ENCODE measurements at regions of chr17 and their contacts with region 1.

Region 1: DNA sequence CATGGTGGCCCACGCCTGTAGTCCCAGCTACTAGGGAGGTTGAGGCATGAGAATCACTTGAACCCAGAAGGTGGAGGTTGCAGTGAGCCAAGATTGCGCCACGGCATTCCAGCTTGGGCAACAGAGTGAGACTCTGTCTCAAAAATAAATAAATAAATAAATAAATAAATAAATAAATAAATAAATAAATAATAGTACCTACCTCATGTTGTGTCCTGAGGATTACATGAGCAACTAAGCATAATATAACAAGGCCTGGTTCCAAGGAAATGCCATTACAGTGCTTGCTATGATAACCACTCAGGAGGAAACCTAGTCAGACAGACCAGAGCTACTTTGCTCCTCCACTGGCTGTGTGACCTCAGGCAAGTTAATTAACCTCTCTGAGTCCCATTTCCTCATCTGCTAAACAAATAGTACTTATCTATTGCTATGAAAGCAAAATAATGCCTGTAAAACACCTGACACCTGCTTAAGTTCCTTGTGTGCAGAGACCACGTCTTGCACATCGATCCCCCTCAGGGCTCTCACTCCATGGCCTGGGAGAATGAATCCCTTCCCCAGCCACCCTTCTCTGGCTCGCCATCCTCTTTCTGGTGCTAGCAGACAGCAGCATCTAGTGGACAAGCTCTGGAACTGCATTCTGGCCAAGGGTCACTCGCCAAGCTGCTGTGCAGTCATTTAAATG is 7.5 kb downstream of the EPOP start:
- DNase-seq: no peak
- ATAC-seq: peak; percentile 76
- H3K4me3 ChIP-seq: no peak overlapping the region
- H3K27ac ChIP-seq: no peak overlapping the region
- H3K4me1 ChIP-seq: peaks cover 5% of the 10 kb centered on the region
- H3K27me3 ChIP-seq: peaks cover 6 to 11% of the 10 kb centered on the region in 2 experiments; a peak in 3 of 4 replicates
- CTCF ChIP-seq: peak; percentile 100; a peak in 5 of 6 replicates
- EP300 ChIP-seq: no peak
- POLR2A ChIP-seq: no peak
- RAD21 ChIP-seq: peak; percentile 100

Region 2: DNA sequence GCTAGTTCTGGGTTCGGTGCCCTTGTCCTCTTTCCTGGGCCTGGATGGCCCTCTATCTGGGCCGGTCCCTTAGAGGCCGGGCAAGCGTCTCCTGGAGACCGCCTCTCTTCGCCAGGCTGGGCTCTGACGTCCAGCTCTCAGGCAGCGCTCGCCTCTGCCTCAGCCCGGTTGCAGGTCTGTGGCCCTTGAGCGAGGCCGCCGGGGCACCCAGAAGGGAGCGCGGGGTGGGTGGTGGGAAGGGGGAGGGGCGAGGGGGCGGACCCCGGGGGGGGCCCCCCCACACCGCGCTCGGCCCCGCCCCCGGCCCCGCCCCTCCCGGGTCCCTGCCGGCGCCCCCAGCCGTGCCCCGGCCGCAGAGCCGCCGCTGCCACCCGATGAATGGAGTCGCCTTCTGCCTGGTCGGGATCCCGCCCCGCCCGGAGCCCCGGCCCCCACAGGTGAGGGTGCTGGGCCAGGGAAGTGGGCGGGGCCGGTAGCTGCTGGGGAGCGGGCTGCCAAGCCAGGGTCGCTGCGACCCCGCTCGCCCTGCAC is 239.1 kb before region 1 on chr17 and contains the start of gene ARHGAP23:
- CTCF ChIA-PET with region 1: interaction called, 10 read pairs
- POLR2A ChIA-PET with region 1: no interaction called
- RAD21 ChIA-PET with region 1: interaction called, 6 read pairs
- SMC1A ChIA-PET with region 1: interaction called, 12 read pairs
- in situ Hi-C with region 1: loop called (anchors 5 kb)
- intact Hi-C with region 1: loop called (anchors 1 kb)
- DNase-seq: no peak
- ATAC-seq: peak; percentile 71
- H3K4me3 ChIP-seq: peak within 1 kb of the TSS; percentile 80
- H3K27ac ChIP-seq: no peak within 1 kb of the TSS
- H3K4me1 ChIP-seq: peaks cover 4% of the 10 kb centered on the region
- H3K27me3 ChIP-seq: no peaks in the 10 kb centered on the region; a peak in 1 of 4 replicates
- CTCF ChIP-seq: no peak
- EP300 ChIP-seq: no peak
- POLR2A ChIP-seq: no peak; the same call in 1 of the 2 replicates
- RAD21 ChIP-seq: no peak
- polyA plus RNA-seq, gene ARHGAP23: 0.23 to 0.35 TPM

Region 3: GRCh38 chr17:38498186-38498752 is 169.0 kb before region 1 on chr17:
- CTCF ChIA-PET with region 1: interaction called, 79 read pairs
- POLR2A ChIA-PET with region 1: no interaction called
- RAD21 ChIA-PET with region 1: interaction called, 11 read pairs
- SMC1A ChIA-PET with region 1: interaction called, 10 read pairs
- in situ Hi-C with region 1: loop called (anchors 5 kb)
- intact Hi-C with region 1: no loop called
- DNase-seq: no peak
- ATAC-seq: no peak
- H3K4me3 ChIP-seq: no peak overlapping the region
- H3K27ac ChIP-seq: no peak overlapping the region
- H3K4me1 ChIP-seq: no peaks in the 10 kb centered on the region
- H3K27me3 ChIP-seq: no peaks in the 10 kb centered on the region
- CTCF ChIP-seq: no peak
- EP300 ChIP-seq: no peak
- POLR2A ChIP-seq: no peak
- RAD21 ChIP-seq: no peak

Region 4: DNA sequence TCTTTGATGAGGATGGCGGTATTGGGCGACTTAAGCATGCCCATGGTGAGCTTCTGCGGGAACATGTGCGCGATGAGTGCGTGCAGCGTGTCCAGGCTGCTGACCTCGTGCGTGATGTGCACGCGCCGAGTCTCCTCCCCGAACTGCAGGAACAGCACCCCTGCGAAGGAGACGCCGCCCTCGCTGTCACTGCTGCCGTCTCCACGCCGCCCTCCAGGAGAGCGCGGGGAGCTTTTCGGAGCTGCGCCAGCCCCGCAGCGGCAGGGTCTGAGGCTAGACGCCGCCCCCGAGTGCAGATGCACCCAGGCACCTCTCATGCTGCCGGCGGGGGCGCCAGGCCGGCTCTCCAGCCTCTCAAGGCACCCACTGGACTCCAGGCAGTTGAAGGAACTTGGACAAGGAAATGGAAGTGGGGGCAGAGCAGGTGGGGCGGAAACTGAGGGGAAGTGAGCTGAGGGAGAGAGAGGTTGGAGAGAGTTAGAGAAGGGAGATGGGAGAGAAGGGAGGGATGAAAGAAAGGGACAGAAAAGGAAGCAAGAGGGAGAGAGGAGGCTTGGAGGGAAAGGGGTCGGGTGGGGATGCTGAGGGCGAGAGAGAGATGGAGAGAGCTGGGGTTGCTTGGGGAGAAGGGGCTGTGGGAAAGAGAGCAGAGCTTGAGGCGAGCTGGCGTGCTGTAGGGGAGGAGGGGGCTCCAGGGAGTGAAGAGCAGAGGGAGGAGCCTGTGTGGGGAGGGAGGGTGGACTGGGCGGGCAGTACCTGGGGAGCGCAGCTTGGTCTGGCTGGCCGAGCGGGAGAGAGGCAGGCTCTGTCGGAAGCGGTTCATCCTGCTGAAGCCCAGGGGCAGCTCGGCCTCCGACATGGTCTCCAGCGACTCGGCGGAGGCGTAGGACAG is 103.6 kb before region 1 on chr17:
- CTCF ChIA-PET with region 1: interaction called, 492 read pairs
- POLR2A ChIA-PET with region 1: interaction called, 15 read pairs
- RAD21 ChIA-PET with region 1: interaction called, 294 read pairs
- SMC1A ChIA-PET with region 1: interaction called, 227 read pairs
- in situ Hi-C with region 1: loop called (anchors 5 kb)
- intact Hi-C with region 1: loop called (anchors 1 kb)
- DNase-seq: no peak
- ATAC-seq: no peak
- H3K4me3 ChIP-seq: no peak overlapping the region
- H3K27ac ChIP-seq: no peak overlapping the region
- H3K4me1 ChIP-seq: peaks cover 14% of the 10 kb centered on the region
- H3K27me3 ChIP-seq: peaks cover 29 to 36% of the 10 kb centered on the region in 2 experiments
- CTCF ChIP-seq: no peak
- EP300 ChIP-seq: no peak
- POLR2A ChIP-seq: no peak
- RAD21 ChIP-seq: no peak

Region 5: DNA sequence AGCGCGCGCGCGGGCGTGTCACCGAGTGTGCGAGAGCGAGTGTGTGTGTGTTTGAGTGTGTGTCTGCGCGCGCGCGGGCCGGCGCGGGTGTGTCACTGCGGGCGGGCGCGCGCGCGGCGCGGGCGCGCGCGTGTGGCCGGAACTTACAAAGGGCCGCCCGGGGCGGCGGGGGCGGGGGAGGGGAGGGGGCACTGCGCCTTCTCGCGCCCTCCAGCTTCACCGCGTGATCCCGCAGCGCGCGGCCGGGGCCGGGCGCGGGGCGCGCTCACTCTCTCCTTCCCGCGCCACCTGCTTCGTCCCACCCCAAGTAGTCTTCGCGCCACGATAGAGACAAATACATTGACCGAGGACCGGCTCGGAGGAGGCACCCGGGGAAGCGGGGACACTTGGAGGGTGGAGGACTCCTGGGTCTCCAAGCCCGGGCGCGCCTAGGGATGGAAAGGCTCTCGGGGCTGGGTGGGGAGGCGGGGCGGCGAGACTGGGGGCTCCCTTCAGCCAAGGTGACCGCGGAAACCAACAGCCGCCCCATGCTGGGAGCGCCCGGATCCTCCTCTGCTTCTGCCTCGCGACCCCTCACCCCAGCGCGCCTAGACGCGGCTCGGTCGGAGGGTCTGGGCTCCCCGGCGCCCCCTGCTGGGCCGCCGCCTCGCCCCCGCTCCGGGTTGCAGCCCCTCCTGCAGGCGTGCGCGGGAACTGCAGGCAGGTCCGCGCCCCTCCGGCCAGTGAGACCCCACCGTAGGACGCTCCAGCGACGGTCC is 61.2 kb before region 1 on chr17 and contains the start of gene SRCIN1:
- CTCF ChIA-PET with region 1: interaction called, 33 read pairs
- POLR2A ChIA-PET with region 1: no interaction called
- RAD21 ChIA-PET with region 1: interaction called, 61 read pairs
- SMC1A ChIA-PET with region 1: interaction called, 7 read pairs
- in situ Hi-C with region 1: no loop called
- intact Hi-C with region 1: loop called (anchors 1 kb)
- DNase-seq: no peak
- ATAC-seq: peak; percentile 58
- H3K4me3 ChIP-seq: peak within 1 kb of the TSS; percentile 82
- H3K27ac ChIP-seq: no peak within 1 kb of the TSS
- H3K4me1 ChIP-seq: peaks cover 11% of the 10 kb centered on the region
- H3K27me3 ChIP-seq: peaks cover 0 to 14% of the 10 kb centered on the region in 2 experiments; a peak in 2 of 4 replicates
- CTCF ChIP-seq: peak; percentile 97 to 99 (median 98)
- EP300 ChIP-seq: no peak
- POLR2A ChIP-seq: peak; percentile 39; the same call in 1 of the 2 replicates
- RAD21 ChIP-seq: peak; percentile 47
- polyA plus RNA-seq, gene SRCIN1: not detected

Region 6: DNA sequence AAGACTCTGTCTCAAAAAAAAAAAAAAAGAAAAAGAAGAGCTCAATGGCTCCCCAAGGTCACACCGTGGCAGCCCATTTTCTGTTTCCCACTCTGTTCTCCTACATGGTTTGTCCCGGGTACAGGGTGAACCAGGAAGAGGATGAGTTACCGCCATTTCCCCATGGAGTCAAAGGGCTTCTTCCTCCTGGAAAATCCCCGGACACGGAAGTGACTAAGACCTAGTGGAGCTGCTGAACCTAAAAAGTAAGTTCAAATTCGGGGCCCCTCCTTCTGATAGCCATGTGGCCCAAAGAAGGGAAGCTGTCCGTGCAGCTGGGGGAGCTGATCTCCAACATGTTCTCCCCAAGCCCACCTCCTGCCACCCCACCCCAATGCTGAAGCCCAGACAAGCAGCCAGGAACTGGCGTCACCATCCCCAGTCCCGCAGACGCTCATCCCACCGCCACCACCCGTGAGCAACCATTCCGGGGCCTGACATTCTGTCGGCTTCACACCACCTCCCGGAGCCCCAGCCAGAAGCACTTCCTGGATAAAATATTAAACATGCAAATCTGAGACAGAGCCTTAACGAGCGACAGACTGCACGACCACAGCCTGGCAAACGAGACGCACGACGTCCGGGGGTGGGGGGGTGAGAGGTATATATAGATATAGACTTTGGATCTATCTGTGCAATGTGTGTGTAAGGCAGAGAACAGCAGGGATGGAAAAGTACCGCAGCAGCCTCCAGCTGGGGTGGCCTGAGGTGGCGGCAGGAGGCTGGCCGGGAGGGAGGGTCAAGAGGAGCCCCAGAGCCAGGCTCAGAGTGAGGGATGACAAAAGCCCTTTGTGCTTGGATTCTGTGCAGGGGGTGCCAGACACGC is 10.1 kb before region 1 on chr17:
- CTCF ChIA-PET with region 1: interaction called, 63 read pairs
- POLR2A ChIA-PET with region 1: interaction called, 6 read pairs
- RAD21 ChIA-PET with region 1: interaction called, 28 read pairs
- SMC1A ChIA-PET with region 1: interaction called, 19 read pairs
- in situ Hi-C with region 1: no loop called
- intact Hi-C with region 1: no loop called
- DNase-seq: no peak
- ATAC-seq: no peak
- H3K4me3 ChIP-seq: no peak overlapping the region
- H3K27ac ChIP-seq: no peak overlapping the region
- H3K4me1 ChIP-seq: peaks cover 55% of the 10 kb centered on the region
- H3K27me3 ChIP-seq: no peaks in the 10 kb centered on the region
- CTCF ChIP-seq: no peak
- EP300 ChIP-seq: no peak
- POLR2A ChIP-seq: peak; percentile 43; the same call in 1 of the 2 replicates
- RAD21 ChIP-seq: no peak

Region 7: GRCh38 chr17:38824899-38825761 is 157.9 kb after region 1 on chr17 and contains the start of gene CWC25:
- CTCF ChIA-PET with region 1: no interaction called
- POLR2A ChIA-PET with region 1: no interaction called
- RAD21 ChIA-PET with region 1: no interaction called
- SMC1A ChIA-PET with region 1: no interaction called
- in situ Hi-C with region 1: no loop called
- intact Hi-C with region 1: no loop called
- DNase-seq: peak; percentile 97
- ATAC-seq: peak; percentile 92
- H3K4me3 ChIP-seq: peak within 1 kb of the TSS; percentile 87
- H3K27ac ChIP-seq: peak within 1 kb of the TSS; percentile 90
- H3K4me1 ChIP-seq: peaks cover 6% of the 10 kb centered on the region
- H3K27me3 ChIP-seq: no peaks in the 10 kb centered on the region
- CTCF ChIP-seq: no peak
- EP300 ChIP-seq: peak; percentile 43 to 80; a peak in 3 of 4 replicates
- POLR2A ChIP-seq: peak; percentile 97
- RAD21 ChIP-seq: 0 out of 2 replicates have a peak, but pooled peaks have one; percentile 2
- polyA plus RNA-seq, gene CWC25: 25.0 to 29.7 TPM

Measured in GM12878 (cell line).